GM12878 (cell line): ENCODE measurements at regions of chr7 and their contacts with region 1.

Region 1: GRCh38 chr7:82152858-82153257 is 290.7 kb downstream of the CACNA2D1 start:
- DNase-seq: no peak
- ATAC-seq: no peak; the same call in 2 of the 3 replicates
- H3K4me3 ChIP-seq: no peak overlapping the region
- H3K27ac ChIP-seq: no peak overlapping the region
- H3K4me1 ChIP-seq: no peaks in the 10 kb centered on the region
- H3K27me3 ChIP-seq: no peaks in the 10 kb centered on the region
- CTCF ChIP-seq: no peak
- EP300 ChIP-seq: no peak
- POLR2A ChIP-seq: no peak
- RAD21 ChIP-seq: no peak

Region 2: DNA sequence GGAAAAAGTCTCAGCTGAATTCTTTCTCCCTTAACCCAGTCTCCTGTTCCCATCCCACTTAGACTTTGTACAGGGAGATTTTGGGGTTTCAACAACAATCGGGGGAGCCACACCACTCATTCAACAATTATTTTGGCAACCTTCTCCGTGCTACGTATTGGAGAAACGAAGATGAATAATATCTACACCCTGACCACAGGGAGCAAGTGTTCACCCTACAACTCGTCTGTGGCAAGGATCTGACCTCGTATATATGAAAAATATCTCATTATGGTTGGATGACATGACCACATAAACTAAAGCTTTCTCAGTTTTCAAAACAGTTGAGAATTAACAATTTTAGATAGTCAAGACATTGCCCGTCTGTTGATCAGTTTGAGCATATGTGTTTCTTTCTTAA is 11.4 kb before region 1 on chr7:
- CTCF ChIA-PET with region 1: interaction called, 6 read pairs
- POLR2A ChIA-PET with region 1: no interaction called
- RAD21 ChIA-PET with region 1: interaction called, 3 read pairs
- SMC1A ChIA-PET with region 1: interaction called, 12 read pairs
- in situ Hi-C with region 1: no loop called
- intact Hi-C with region 1: no loop called
- DNase-seq: no peak
- ATAC-seq: peak; percentile 88
- H3K4me3 ChIP-seq: no peak overlapping the region
- H3K27ac ChIP-seq: no peak overlapping the region
- H3K4me1 ChIP-seq: no peaks in the 10 kb centered on the region
- H3K27me3 ChIP-seq: no peaks in the 10 kb centered on the region; a peak in 1 of 4 replicates
- CTCF ChIP-seq: no peak
- EP300 ChIP-seq: no peak
- POLR2A ChIP-seq: no peak
- RAD21 ChIP-seq: no peak

Region 3: DNA sequence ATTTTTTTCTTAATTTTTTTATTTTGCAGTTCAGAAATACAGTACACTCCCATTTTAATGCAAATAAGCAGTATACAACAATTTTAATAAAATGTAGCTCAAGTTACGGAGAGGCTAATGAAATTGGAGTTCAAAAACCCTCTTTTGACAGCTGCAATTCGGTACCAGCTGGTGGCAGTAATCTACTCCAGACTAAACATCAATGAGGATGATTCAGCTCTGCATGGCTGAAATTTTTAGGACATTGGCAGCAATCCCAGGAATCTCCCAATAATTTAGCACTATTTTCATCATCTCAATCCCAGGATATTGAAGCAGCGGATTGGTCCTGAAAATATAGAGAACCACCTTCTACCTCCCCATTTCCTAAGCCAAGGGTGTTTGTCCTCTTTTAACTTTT is 12.0 kb after region 1 on chr7:
- CTCF ChIA-PET with region 1: interaction called, 4 read pairs
- POLR2A ChIA-PET with region 1: no interaction called
- RAD21 ChIA-PET with region 1: interaction called, 9 read pairs
- SMC1A ChIA-PET with region 1: interaction called, 34 read pairs
- in situ Hi-C with region 1: no loop called
- intact Hi-C with region 1: no loop called
- DNase-seq: no peak
- ATAC-seq: peak; percentile 48; the same call in 2 of the 3 replicates
- H3K4me3 ChIP-seq: no peak overlapping the region
- H3K27ac ChIP-seq: no peak overlapping the region
- H3K4me1 ChIP-seq: no peaks in the 10 kb centered on the region
- H3K27me3 ChIP-seq: no peaks in the 10 kb centered on the region
- CTCF ChIP-seq: no peak; a peak in 1 of 6 replicates
- EP300 ChIP-seq: no peak
- POLR2A ChIP-seq: no peak
- RAD21 ChIP-seq: 0 out of 2 replicates have a peak, but pooled peaks have one; percentile 8